ENCODE measurements at regions of chr19 and their contacts with region 1.

Region 1: DNA sequence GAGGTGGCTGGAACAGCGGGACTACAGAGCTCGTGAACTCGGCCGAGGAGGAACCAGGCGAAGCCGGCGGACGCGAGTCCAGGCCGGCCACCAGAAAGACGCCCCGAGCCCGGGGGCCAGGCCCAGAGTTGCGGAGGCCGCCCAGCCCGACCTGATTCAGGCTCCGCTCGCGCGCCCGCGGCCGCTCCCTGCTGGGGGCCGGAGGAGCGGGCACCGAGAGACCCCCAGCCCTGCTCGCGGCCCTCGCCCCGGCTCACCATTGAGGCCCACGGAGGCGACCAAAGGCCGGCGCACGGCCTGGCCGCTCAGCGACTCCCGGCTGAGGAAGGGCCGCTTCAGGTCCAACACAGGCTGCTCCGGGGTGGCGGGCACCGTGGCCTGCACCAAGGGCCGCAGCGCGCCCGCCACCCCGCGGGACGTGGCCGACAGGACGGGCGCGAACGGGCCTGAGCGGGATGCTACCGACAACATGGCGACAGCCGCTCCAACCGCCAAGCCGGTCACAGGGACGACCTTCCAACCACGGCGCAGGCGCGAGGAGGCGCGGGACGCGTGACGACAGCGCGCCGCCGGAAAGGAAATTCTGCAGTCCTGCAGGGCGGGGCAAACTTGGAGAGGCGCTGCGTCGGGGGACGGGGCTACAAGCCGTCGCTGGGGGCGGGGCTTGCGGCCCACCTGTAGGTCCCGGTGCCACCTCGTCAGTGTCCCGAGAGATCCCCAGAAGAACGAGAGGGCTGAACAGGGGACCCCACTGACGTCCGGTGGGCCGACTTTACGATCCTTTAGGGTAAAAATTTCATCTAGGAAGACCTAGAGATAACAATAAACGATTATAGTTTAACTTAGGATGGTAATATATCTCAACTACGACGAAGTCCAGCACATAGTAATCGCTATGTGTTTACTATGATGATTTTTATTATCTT is at the start of gene UQCRFS1:
- DNase-seq: peak; percentile 98
- ATAC-seq: peak; percentile 98
- H3K4me3 Mint-ChIP-seq: peak within 1 kb of the TSS; percentile 95
- H3K27ac Mint-ChIP-seq: peak within 1 kb of the TSS; percentile 95
- H3K4me1 Mint-ChIP-seq: peaks cover 48% of the 10 kb centered on the region
- H3K27me3 Mint-ChIP-seq: peaks cover 3% of the 10 kb centered on the region
- total RNA-seq, gene UQCRFS1: 39.1 to 45.3 TPM

Region 2: GRCh38 chr19:27793644-27794493 is 1419.0 kb before region 1 on chr19:
- CTCF ChIA-PET with region 1: no interaction called
- POLR2A ChIA-PET with region 1: no interaction called
- intact Hi-C with region 1: loop called in 1 of 2 experiments (anchors 2 kb)
- DNase-seq: peak; percentile 96
- ATAC-seq: peak; percentile 95
- H3K4me3 Mint-ChIP-seq: peak overlapping the region; percentile 96
- H3K27ac Mint-ChIP-seq: peak overlapping the region; percentile 99
- H3K4me1 Mint-ChIP-seq: peaks cover 14% of the 10 kb centered on the region
- H3K27me3 Mint-ChIP-seq: no peaks in the 10 kb centered on the region

Region 3: DNA sequence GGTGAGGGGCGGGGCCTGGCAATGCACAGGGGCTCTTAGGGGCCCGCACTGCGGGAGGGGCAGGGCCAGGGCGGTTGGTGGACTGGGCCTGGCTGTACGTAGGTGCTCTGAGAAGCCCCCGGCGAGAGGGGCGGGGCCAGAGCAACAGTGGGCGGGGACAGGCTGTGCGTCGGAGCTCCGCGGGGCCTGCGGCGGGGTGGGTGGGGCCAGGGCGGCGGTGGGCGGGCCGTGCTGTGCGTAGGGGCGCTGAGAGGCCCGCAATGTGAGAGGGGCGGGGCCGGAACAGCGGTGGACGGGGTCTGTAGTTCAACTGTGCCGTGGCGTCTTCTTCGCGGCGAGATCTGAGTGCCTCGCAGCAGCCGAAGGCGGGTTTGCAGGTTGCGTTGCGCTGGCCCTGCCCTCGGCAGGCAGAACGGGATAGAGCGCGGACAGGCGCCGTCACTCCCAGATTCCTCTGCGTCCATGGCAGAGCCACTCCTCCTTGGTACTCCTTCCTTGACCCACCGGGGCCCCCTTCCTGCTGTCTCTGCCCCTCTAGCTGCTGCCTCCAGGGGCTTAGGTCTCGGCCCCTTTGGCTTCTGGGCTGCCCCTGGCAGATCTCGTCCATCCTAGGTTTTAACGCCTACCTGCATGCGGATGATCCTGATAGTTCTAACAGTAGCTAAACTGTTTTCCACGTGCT is 632.1 kb after region 1 on chr19:
- CTCF ChIA-PET with region 1: no interaction called
- POLR2A ChIA-PET with region 1: no interaction called
- intact Hi-C with region 1: loop called in 1 of 2 experiments (anchors 10 kb)
- DNase-seq: peak; percentile 99
- ATAC-seq: peak; percentile 83
- H3K4me3 Mint-ChIP-seq: peak overlapping the region; percentile 83
- H3K27ac Mint-ChIP-seq: peak overlapping the region; percentile 83
- H3K4me1 Mint-ChIP-seq: peaks cover 11% of the 10 kb centered on the region
- H3K27me3 Mint-ChIP-seq: no peaks in the 10 kb centered on the region